K562 (cell line): ENCODE measurements at regions of chr12 and their contacts with region 1.

Region 1: DNA sequence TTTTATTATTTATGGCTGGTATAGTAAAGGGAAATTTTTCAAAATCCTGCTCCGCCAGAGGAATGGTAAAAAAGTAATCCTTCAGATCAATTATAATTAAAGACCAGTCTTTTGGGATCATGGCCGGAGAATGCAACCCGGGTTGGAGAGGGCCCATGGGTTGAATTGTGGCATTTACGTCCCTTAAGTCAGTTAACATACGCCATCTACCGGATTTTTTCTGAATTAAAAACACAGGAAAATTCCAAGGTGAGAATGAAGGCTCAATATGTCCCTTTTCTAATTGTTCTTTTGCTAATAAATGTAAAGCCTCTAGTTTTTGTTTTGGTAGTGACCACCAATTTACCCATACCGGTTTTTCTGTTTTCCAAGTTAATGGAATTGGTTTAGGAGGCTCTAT is 602.8 kb downstream of the ALG10 start:
- DNase-seq: peak in 2 of 4 experiments; percentile 15 to 28
- ATAC-seq: no peak
- H3K4me3 ChIP-seq: no peak overlapping the region
- H3K27ac ChIP-seq: no peak overlapping the region
- H3K4me1 ChIP-seq: no peaks in the 10 kb centered on the region
- H3K27me3 ChIP-seq: no peaks in the 10 kb centered on the region
- CTCF ChIP-seq: peak; percentile 29 to 46 (median 34); a peak in 3 of 6 replicates
- EP300 ChIP-seq: no peak
- POLR2A ChIP-seq: no peak
- RAD21 ChIP-seq: peak in 1 of 2 experiments; percentile 49; a peak in 2 of 4 replicates

Region 2: DNA sequence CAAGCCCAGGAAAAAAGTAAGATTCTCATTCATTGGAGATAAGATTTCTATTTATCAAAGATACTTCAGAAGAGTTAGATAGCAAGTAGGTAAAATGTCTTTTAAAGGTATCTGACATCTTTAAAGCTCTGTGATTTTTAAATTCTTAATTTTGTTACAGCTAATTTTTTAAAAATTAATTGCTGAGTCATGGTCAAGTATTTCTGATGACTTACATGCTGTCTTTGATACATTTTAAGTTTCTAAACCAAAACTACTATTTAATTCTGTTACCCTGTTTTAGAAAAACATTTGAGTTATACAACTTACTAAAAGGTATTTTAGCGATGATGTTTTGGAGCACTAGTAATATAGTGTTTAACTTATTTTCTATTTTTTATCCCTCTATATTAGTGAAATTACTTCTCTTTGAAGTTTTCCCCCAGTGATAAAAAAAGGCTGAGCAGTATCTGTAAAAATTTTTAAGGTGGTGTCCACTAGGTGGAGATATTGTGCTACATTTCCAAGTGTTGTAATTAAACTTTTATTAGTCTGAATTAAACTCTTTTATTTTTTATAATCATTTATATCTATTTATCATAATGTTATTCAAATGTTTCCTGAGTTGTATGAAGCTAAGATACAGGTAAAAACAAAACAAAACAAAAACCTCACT is 591.4 kb before region 1 on chr12:
- CTCF ChIA-PET with region 1: no interaction called
- POLR2A ChIA-PET with region 1: no interaction called
- in situ Hi-C with region 1: loop called (anchors 10 kb)
- intact Hi-C with region 1: loop called (anchors 2 kb)
- DNase-seq: peak; percentile 18 to 53 (median 24)
- ATAC-seq: no peak
- H3K4me3 ChIP-seq: no peak overlapping the region
- H3K27ac ChIP-seq: no peak overlapping the region
- H3K4me1 ChIP-seq: no peaks in the 10 kb centered on the region
- H3K27me3 ChIP-seq: no peaks in the 10 kb centered on the region
- CTCF ChIP-seq: peak in 2 of 3 experiments; percentile 27 to 59; a peak in 3 of 6 replicates
- EP300 ChIP-seq: no peak
- POLR2A ChIP-seq: no peak
- RAD21 ChIP-seq: peak; percentile 27 to 58; a peak in 2 of 4 replicates

Region 3: GRCh38 chr12:34218165-34219045 is 406.7 kb before region 1 on chr12:
- CTCF ChIA-PET with region 1: no interaction called
- POLR2A ChIA-PET with region 1: no interaction called
- in situ Hi-C with region 1: no loop called
- intact Hi-C with region 1: loop called (anchors 10 kb)
- DNase-seq: peak; percentile 46 to 78 (median 56)
- ATAC-seq: peak; percentile 90
- H3K4me3 ChIP-seq: 0 out of 2 replicates have a peak overlapping the region, but pooled peaks have one; percentile 19
- H3K27ac ChIP-seq: no peak overlapping the region
- H3K4me1 ChIP-seq: peaks cover 0 to 8% of the 10 kb centered on the region in 2 experiments; a peak in 2 of 5 replicates
- H3K27me3 ChIP-seq: no peaks in the 10 kb centered on the region; a peak in 1 of 5 replicates
- CTCF ChIP-seq: peak; percentile 79 to 91 (median 87)
- EP300 ChIP-seq: no peak
- POLR2A ChIP-seq: no peak
- RAD21 ChIP-seq: peak; percentile 68 to 88

Region 4: GRCh38 chr12:34292736-34293625 is 332.1 kb before region 1 on chr12:
- CTCF ChIA-PET with region 1: no interaction called
- POLR2A ChIA-PET with region 1: no interaction called
- in situ Hi-C with region 1: no loop called
- intact Hi-C with region 1: loop called (anchors 5 kb)
- DNase-seq: peak; percentile 37 to 73 (median 42)
- ATAC-seq: peak; percentile 88
- H3K4me3 ChIP-seq: no peak overlapping the region
- H3K27ac ChIP-seq: no peak overlapping the region
- H3K4me1 ChIP-seq: peaks cover 0 to 16% of the 10 kb centered on the region in 2 experiments; a peak in 2 of 5 replicates
- H3K27me3 ChIP-seq: peaks cover 6 to 29% of the 10 kb centered on the region in 2 experiments; a peak in 3 of 5 replicates
- CTCF ChIP-seq: peak; percentile 62 to 70 (median 63)
- EP300 ChIP-seq: no peak
- POLR2A ChIP-seq: no peak
- RAD21 ChIP-seq: peak in 1 of 2 experiments; percentile 48; a peak in 2 of 4 replicates

Region 5: GRCh38 chr12:34327671-34328070 is 297.4 kb before region 1 on chr12:
- CTCF ChIA-PET with region 1: no interaction called
- POLR2A ChIA-PET with region 1: no interaction called
- in situ Hi-C with region 1: loop called (anchors 10 kb)
- intact Hi-C with region 1: no loop called
- DNase-seq: no peak
- ATAC-seq: no peak
- H3K4me3 ChIP-seq: no peak overlapping the region
- H3K27ac ChIP-seq: no peak overlapping the region
- H3K4me1 ChIP-seq: peaks cover 0 to 11% of the 10 kb centered on the region in 2 experiments; a peak in 2 of 5 replicates
- H3K27me3 ChIP-seq: peaks cover 0 to 60% of the 10 kb centered on the region in 2 experiments; a peak in 3 of 5 replicates
- CTCF ChIP-seq: no peak
- EP300 ChIP-seq: no peak
- POLR2A ChIP-seq: no peak
- RAD21 ChIP-seq: no peak

Region 6: GRCh38 chr12:34347367-34347766 is 277.7 kb before region 1 on chr12:
- CTCF ChIA-PET with region 1: no interaction called
- POLR2A ChIA-PET with region 1: no interaction called
- in situ Hi-C with region 1: no loop called
- intact Hi-C with region 1: loop called (anchors 1 kb)
- DNase-seq: peak; percentile 72 to 84 (median 80)
- ATAC-seq: peak; percentile 79
- H3K4me3 ChIP-seq: peak overlapping the region; percentile 35
- H3K27ac ChIP-seq: peak overlapping the region; percentile 72
- H3K4me1 ChIP-seq: peaks cover 25 to 100% of the 10 kb centered on the region in 2 experiments
- H3K27me3 ChIP-seq: 0 out of 5 replicates have a peak, but pooled peaks cover 0 to under 1% of the 10 kb centered on the region in 2 experiments
- CTCF ChIP-seq: peak; percentile 73 to 86 (median 77)
- EP300 ChIP-seq: 0 out of 2 replicates have a peak, but pooled peaks have one; percentile 13
- POLR2A ChIP-seq: no peak; the same call in 1 of the 2 replicates
- RAD21 ChIP-seq: peak in 1 of 2 experiments; percentile 21; a peak in 1 of 4 replicates